ENCODE measurements at regions of chr19 and their contacts with region 1.

Region 1: GRCh38 chr19:924943-925525 is 801 bp upstream of the ARID3A start:
- DNase-seq: peak; percentile 63
- ATAC-seq: peak; percentile 64

Region 2: DNA sequence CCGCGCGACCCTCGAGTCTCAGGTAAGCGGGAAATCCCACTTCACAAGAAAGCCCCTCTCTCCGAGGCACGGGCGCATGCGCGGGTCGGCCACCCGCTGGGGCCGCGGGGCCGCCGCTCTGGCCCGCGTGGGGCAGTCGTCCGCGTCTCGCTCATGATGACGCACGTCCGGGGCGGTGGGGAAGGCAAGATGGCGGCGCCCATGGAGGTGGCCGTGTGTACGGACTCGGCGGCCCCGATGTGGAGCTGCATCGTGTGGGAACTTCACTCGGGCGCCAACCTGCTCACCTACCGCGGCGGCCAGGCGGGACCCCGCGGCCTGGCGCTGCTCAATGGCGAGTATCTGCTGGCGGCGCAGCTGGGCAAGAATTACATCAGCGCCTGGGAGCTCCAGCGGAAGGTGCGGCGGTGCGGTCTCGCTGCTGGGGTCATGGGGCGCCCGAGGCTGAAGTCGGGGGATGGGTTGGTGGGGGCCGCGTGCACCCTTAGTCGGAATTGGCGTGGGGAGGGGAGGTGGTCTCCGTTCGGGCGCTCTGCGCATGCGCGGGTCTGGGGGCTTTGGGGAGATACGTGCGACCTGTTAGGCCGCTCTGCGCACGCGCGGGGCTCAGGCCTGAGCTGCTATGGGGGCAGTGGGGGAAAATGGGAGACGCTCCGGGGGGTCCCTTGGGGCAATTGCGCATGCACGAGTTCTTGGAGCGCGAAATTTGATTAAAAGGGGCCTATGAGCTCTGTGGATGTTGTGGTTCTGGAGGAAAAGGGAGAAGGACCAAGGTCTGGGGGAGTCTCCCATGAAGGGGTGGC is 59.3 kb after region 1 on chr19 and contains the start of gene WDR18:
- intact Hi-C with region 1: loop called (anchors 5 kb)
- DNase-seq: peak; percentile 97
- ATAC-seq: peak; percentile 96
- total RNA-seq, gene WDR18: 20.4 TPM

Measured in left ventricle myocardium superior (tissue), 1 donor.